MCF 10A (cell line): ENCODE measurements at regions of chr6 and their contacts with region 1.

Region 1: GRCh38 chr6:142946181-142946923 is 1.4 kb upstream of the HIVEP2 start:
- DNase-seq: peak; percentile 99
- H3K4me3 Mint-ChIP-seq: peak overlapping the region; percentile 92
- H3K27ac Mint-ChIP-seq: peak overlapping the region; percentile 63
- H3K4me1 Mint-ChIP-seq: peaks cover 21% of the 10 kb centered on the region
- H3K27me3 Mint-ChIP-seq: no peaks in the 10 kb centered on the region
- CTCF ChIP-seq: no peak

Region 2: DNA sequence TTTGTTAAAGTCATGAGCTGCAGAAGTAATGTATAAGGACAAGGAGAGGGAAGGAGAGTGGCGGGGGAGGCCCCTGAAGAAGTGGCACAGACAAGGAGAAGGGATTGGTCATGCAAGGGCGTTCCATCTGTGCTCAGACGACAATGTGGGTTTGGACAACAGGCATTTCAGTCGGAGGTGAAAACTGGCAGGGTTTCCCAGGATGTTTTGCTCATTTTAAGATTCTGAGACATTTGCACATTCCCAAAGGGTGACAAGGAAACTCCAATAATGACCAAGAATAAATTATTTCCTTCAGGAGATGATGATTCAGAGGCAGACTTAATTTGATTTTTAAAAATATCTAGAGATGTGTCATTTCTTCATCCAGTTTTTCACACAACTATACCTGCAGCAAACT is 183.1 kb before region 1 on chr6:
- CTCF ChIA-PET with region 1: no interaction called
- POLR2A ChIA-PET with region 1: interaction called, 5 read pairs
- intact Hi-C with region 1: loop called (anchors 5 kb)
- DNase-seq: no peak
- H3K4me3 Mint-ChIP-seq: no peak overlapping the region
- H3K27ac Mint-ChIP-seq: peak overlapping the region; percentile 49
- H3K4me1 Mint-ChIP-seq: peaks cover 9% of the 10 kb centered on the region
- H3K27me3 Mint-ChIP-seq: no peaks in the 10 kb centered on the region
- CTCF ChIP-seq: no peak

Region 3: GRCh38 chr6:142885182-142885867 is 61.0 kb before region 1 on chr6:
- CTCF ChIA-PET with region 1: interaction called, 3 read pairs
- POLR2A ChIA-PET with region 1: interaction called, 20 read pairs
- intact Hi-C with region 1: loop called (anchors 1 kb)
- DNase-seq: peak; percentile 97
- H3K4me3 Mint-ChIP-seq: peak overlapping the region; percentile 71
- H3K27ac Mint-ChIP-seq: peak overlapping the region; percentile 36
- H3K4me1 Mint-ChIP-seq: peaks cover 32% of the 10 kb centered on the region
- H3K27me3 Mint-ChIP-seq: no peaks in the 10 kb centered on the region
- CTCF ChIP-seq: no peak

Region 4: DNA sequence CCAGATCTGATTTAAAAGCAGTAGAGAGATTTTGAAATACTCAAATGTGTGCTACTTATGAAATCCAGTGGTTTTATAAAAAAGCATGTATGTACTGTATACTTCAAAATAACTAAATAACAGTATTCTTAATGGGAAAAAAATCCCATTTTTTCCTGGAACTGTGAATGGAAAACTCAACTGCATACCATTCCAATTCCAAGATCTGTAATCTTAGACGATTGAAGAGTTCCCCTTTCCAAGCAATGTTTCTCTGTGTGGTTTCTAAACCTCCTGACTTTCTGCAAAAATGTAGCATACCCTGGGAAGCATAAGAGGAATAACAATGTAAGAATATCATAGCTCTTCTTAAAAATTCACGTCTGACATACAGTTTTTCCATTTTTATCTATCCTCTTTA is 38.9 kb after region 1 on chr6:
- CTCF ChIA-PET with region 1: no interaction called
- POLR2A ChIA-PET with region 1: no interaction called
- intact Hi-C with region 1: no loop called
- DNase-seq: no peak
- H3K4me3 Mint-ChIP-seq: no peak overlapping the region
- H3K27ac Mint-ChIP-seq: no peak overlapping the region
- H3K4me1 Mint-ChIP-seq: no peaks in the 10 kb centered on the region
- H3K27me3 Mint-ChIP-seq: no peaks in the 10 kb centered on the region
- CTCF ChIP-seq: no peak

Region 5: GRCh38 chr6:143060354-143060805 is 114.0 kb after region 1 on chr6:
- CTCF ChIA-PET with region 1: no interaction called
- POLR2A ChIA-PET with region 1: interaction called, 54 read pairs
- intact Hi-C with region 1: loop called (anchors 1 kb)
- DNase-seq: peak; percentile 90
- H3K4me3 Mint-ChIP-seq: peak overlapping the region; percentile 94
- H3K27ac Mint-ChIP-seq: peak overlapping the region; percentile 97
- H3K4me1 Mint-ChIP-seq: peaks cover 37% of the 10 kb centered on the region
- H3K27me3 Mint-ChIP-seq: no peaks in the 10 kb centered on the region
- CTCF ChIP-seq: no peak

Region 6: DNA sequence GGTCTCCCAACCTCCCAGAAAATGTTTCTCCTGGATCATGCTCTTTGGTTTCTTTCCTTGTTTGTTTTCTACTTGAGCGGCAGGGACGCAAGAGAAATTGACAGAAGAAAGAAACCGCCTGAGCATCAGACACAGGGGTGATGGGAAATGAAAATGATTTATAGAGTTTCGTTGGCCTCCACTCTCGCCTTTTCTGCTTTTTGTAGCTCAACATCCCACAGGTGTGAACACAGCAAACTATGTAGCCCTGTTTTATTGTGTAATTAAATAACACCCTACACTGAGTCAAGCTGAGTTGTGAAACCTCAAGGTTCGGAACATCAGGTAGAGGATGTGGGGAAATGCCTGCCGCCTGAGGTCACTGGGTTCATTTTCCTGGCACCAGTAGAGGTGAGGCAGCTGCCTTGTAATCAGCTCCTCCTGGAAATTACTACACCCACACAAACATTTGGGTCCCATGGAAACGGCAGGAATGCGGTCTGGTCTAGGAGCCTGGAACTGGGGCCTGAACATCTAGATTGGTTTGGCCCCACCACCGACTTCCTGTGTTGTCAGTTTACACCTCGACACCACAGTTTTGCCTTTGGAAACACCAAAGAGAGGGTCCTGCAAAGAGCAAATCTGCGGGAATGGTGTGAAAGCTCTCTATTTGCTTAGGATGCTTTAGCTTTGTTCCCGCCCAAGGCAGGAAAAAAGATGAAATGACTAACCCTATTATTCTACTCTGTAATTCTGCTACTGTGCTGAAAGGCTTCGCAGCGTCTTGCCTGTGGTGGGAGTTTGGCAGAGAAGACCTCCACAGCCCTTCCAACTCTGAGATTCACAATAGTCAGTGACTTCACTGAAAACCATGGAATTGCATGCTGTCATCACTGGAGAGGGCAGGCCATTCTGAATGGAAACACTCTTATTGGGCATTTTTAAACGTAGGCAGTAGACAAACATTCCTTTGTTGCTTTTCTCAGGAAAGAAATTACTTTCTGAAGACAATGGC is 451.2 kb after region 1 on chr6:
- CTCF ChIA-PET with region 1: interaction called, 3 read pairs
- POLR2A ChIA-PET with region 1: interaction called, 42 read pairs
- intact Hi-C with region 1: loop called (anchors 1 kb)
- DNase-seq: peak; percentile 99
- H3K4me3 Mint-ChIP-seq: peak overlapping the region; percentile 24
- H3K27ac Mint-ChIP-seq: peak overlapping the region; percentile 100
- H3K4me1 Mint-ChIP-seq: peaks cover 73% of the 10 kb centered on the region
- H3K27me3 Mint-ChIP-seq: no peaks in the 10 kb centered on the region
- CTCF ChIP-seq: no peak